GM12878 (cell line): ENCODE measurements at regions of chr1 and their contacts with region 1.

Region 1: DNA sequence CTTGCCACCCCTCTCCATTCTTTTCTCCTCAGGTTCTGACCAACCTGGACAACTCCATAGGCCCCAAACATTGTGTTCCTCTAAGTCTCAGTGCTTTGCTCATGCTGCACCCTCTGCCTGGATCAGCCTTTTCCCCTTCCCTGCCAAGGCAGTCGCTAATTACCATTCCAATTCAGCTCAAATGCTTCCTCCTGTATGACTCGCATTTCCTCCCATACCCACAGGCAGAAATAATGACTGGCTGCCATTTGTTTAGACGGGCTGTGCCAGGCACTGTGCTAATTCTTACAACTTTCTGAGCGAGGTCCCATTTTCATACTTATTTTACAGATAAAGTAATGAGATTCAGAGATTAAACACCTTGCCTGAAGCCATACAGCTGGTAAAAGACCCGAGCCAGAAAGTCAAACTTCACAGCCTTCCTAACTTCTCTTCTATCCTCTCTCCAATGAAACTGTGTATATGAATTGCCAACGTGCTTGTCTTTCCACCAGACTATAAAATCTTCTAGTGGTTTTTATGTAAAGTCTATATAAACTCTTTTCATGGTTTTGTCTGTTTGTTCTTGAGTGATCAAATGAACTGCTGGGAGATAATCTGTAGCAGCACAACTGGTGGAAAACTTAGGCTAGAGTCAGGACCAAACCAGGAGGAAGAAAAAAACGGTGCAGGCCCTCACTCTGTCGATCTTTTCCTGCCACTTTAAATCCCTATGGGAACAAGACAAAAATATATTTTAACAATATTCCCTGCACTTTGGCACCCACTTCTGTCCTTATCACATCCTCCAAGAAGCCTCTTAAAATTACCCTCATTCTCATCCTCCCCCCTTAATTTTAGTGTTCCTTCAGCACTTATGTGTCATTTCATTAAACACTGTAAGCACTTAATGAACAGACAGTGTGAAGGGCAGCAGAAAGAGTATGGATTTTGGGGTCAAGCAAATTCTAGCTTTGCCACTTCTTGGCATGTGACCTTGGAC is 33.7 kb downstream of the RAB3B start:
- DNase-seq: no peak
- ATAC-seq: peak; percentile 13
- H3K4me3 ChIP-seq: no peak overlapping the region
- H3K27ac ChIP-seq: no peak overlapping the region
- H3K4me1 ChIP-seq: peaks cover 21% of the 10 kb centered on the region
- H3K27me3 ChIP-seq: no peaks in the 10 kb centered on the region
- CTCF ChIP-seq: no peak
- EP300 ChIP-seq: no peak
- POLR2A ChIP-seq: no peak
- RAD21 ChIP-seq: no peak

Region 2: DNA sequence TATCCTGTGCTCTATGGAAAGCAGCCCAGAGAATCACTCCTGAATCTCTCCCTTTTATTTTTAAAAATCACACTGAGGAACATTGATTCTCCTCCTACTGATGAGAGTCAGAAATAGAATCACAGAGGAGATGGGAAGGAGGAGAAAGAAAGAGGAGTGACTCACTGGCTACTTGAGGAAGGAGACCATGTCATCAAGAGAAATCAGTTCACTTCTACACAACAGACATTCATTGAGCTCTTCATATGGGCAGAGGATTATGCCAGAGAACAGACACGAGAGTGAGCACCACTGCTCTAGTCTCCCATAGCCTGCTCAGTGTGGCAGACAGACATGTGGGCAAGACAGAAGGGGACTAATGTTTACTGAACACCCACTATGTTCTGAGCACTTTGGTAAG is 10.5 kb before region 1 on chr1:
- CTCF ChIA-PET with region 1: interaction called, 22 read pairs
- POLR2A ChIA-PET with region 1: interaction called, 4 read pairs
- RAD21 ChIA-PET with region 1: interaction called, 6 read pairs
- SMC1A ChIA-PET with region 1: interaction called, 12 read pairs
- in situ Hi-C with region 1: no loop called
- intact Hi-C with region 1: no loop called
- DNase-seq: no peak
- ATAC-seq: no peak
- H3K4me3 ChIP-seq: no peak overlapping the region
- H3K27ac ChIP-seq: no peak overlapping the region
- H3K4me1 ChIP-seq: no peaks in the 10 kb centered on the region
- H3K27me3 ChIP-seq: no peaks in the 10 kb centered on the region
- CTCF ChIP-seq: no peak
- EP300 ChIP-seq: no peak
- POLR2A ChIP-seq: no peak
- RAD21 ChIP-seq: no peak

Region 3: DNA sequence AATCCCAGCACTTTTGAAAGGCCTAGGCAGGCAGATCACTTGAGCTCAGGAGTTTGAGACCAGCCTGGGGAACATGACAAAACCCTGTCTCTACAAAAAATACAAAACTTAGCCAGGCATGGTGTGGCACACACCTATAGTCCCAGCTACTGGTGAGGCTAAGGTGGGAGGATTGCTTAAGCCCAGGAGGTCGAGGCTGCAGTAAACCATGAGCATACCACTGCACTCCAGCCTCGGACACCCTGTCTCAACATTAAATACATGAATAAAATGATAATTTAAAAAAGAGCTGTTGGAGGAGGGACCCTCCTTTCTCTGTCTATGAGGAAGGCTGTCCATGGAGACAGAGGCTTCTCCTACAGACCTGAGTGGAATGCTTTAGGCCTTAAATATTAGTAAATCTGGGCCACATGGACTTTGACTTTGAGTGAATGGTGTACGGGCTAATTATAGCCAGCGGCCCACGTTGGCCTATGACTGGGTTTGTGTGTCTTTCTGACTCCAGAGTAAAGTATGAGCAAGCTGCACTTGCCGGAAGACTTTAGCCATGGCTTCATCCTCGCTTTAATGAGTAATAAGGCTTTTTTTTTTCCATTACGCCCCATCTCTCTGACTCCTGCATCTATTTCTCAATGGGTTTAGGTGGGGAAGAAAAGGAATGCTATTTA is 12.4 kb after region 1 on chr1:
- CTCF ChIA-PET with region 1: interaction called, 10 read pairs
- POLR2A ChIA-PET with region 1: interaction called, 12 read pairs
- RAD21 ChIA-PET with region 1: interaction called, 8 read pairs
- SMC1A ChIA-PET with region 1: interaction called, 66 read pairs
- in situ Hi-C with region 1: no loop called
- intact Hi-C with region 1: no loop called
- DNase-seq: no peak
- ATAC-seq: no peak
- H3K4me3 ChIP-seq: no peak overlapping the region
- H3K27ac ChIP-seq: no peak overlapping the region
- H3K4me1 ChIP-seq: peaks cover 10% of the 10 kb centered on the region
- H3K27me3 ChIP-seq: no peaks in the 10 kb centered on the region
- CTCF ChIP-seq: no peak
- EP300 ChIP-seq: no peak
- POLR2A ChIP-seq: no peak
- RAD21 ChIP-seq: no peak